ENCODE measurements at regions of chr1 and their contacts with region 1.

Region 1: DNA sequence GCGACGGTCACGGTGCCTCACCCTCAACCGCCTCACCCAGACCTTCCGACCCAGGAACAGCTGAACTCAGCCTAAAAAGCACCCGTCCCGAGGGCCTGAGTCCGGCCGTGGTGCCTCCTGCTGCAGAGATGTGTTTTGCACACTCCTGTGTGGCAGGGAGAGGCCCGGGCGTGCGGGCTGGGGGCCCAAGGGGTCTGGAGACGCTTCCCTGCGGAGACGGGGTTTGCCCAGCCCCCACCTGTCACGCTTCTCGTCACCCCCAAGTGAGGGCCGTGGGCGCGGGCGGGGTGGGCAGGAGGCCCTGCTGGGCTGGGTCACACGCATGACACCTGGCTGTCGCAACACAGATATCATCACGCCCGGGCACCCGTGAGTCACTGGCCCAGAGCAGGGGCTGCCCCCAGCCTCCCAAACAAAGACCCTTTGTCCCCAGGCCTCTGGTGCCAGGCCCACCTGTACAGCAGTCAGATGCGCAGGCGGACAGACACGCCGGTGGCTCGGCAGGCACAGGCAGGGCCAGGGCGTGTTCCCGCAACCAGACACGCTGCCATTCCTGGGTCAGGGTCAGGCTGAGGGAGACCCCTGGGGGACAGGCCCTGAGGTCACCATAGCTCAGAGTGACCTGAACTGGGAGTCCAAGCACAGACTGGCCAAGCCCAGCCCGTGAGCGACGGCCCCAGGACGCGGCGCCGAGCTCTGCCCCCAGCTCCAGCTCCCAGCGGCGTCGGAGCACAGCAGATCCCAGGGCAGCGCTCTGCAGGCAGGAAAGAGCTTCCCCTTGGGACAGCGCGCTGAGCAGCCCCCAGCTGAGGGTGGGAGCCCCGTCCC is 6.1 kb downstream of the B3GALT6 start:
- DNase-seq: no peak
- ATAC-seq: peak; percentile 2; the same call in 1 of the 2 replicates
- H3K4me3 ChIP-seq: no peak overlapping the region
- H3K27ac ChIP-seq: no peak overlapping the region
- H3K4me1 ChIP-seq: peaks cover 14% of the 10 kb centered on the region
- H3K27me3 ChIP-seq: no peaks in the 10 kb centered on the region
- CTCF ChIP-seq: no peak
- POLR2A ChIP-seq: no peak
- RAD21 ChIP-seq: no peak

Region 2: DNA sequence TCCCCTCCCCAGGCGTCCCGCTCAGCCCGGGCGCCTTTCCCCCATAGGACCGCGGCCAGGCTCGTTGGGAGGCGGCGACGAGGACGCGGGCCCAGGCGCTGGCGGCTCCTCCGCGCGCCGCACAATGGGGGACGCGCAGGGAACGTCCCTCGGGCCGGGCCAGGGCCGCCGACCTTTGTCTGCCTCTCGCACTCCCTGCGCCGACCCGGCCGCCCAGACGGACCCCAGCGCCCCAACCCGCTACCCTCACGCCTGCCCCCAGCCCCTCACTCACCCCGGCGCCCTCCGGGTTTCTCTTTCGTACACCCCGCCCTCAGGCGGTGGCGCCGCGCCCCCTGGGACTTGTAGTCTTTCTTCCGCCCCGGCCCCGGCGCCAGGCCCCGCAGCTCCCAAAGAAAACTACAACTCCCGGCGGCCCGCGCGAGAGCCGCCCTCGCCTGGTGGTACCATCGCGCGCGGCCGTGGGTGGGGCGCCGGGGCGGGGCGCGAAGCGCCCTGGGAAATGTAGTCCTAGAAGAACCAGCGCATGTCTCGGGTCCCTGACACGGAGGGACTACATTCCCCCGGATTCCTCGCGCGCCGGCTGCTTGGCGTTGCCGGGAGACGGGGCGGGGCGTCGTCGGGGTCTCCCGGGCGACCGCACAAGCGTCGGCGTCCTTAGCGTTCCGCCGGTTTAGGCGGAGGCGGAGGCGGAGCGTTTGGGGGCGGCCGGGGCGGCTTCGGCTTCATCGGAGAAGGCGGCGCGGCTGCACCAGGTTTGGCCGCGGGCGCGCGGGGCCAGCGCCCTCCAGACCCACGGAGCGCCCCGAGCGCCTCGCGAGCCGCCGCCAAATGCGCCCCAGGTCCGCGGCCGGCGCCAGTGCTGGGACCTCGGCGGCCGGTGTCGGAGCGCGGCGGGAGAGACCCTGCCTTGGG is 122.0 kb before region 1 on chr1 and contains the start of gene C1orf159:
- CTCF ChIA-PET with region 1: no interaction called
- POLR2A ChIA-PET with region 1: no interaction called
- dilution Hi-C with region 1: no loop called
- in situ Hi-C with region 1: no loop called
- intact Hi-C with region 1: no loop called
- DNase-seq: peak; percentile 95
- ATAC-seq: peak; percentile 98
- H3K4me3 ChIP-seq: peak within 1 kb of the TSS; percentile 84
- H3K27ac ChIP-seq: peak within 1 kb of the TSS; percentile 20; the same call in 1 of the 2 replicates
- H3K4me1 ChIP-seq: 0 out of 2 replicates have a peak, but pooled peaks cover 1% of the 10 kb centered on the region
- H3K27me3 ChIP-seq: no peaks in the 10 kb centered on the region; the same call in 1 of the 2 replicates
- CTCF ChIP-seq: no peak
- POLR2A ChIP-seq: no peak
- RAD21 ChIP-seq: no peak
- total RNA-seq, gene C1orf159: 2.5 and 2.9 TPM in 2 replicates

Region 3: GRCh38 chr1:1264868-1265272 is 26.8 kb after region 1 on chr1:
- CTCF ChIA-PET with region 1: no interaction called
- POLR2A ChIA-PET with region 1: interaction called, 3 read pairs
- dilution Hi-C with region 1: no loop called
- in situ Hi-C with region 1: no loop called
- intact Hi-C with region 1: loop called (anchors 1 kb)
- DNase-seq: peak; percentile 100
- ATAC-seq: peak; percentile 85
- H3K4me3 ChIP-seq: no peak overlapping the region
- H3K27ac ChIP-seq: peak overlapping the region; percentile 96
- H3K4me1 ChIP-seq: peaks cover 33% of the 10 kb centered on the region
- H3K27me3 ChIP-seq: no peaks in the 10 kb centered on the region
- CTCF ChIP-seq: peak; percentile 72
- POLR2A ChIP-seq: no peak; the same call in 1 of the 2 replicates
- RAD21 ChIP-seq: peak; percentile 70

Measured in IMR-90 (cell line).